H1 (cell line): ENCODE measurements at regions of chr10 and their contacts with region 1.

Region 1: GRCh38 chr10:97196223-97197029 is 10.7 kb upstream of the SLIT1 start:
- DNase-seq: peak; percentile 56 to 85
- H3K4me3 ChIP-seq: peak overlapping the region; percentile 49 to 76 (median 64)
- H3K27ac ChIP-seq: no peak overlapping the region
- H3K4me1 ChIP-seq: peaks cover 2 to 9% (median 5%) of the 10 kb centered on the region in 4 experiments; a peak in 5 of 7 replicates
- H3K27me3 ChIP-seq: peaks cover 0 to 12% (median 7%) of the 10 kb centered on the region in 4 experiments; a peak in 5 of 7 replicates
- CTCF ChIP-seq: peak; percentile 73 to 89 (median 83)
- EP300 ChIP-seq: no peak
- POLR2A ChIP-seq: no peak
- RAD21 ChIP-seq: peak; percentile 55 to 73

Region 2: GRCh38 chr10:96987842-96988175 is 208.6 kb before region 1 on chr10:
- CTCF ChIA-PET with region 1: no interaction called
- POLR2A ChIA-PET with region 1: no interaction called
- DNase-seq: no peak
- H3K4me3 ChIP-seq: no peak overlapping the region
- H3K27ac ChIP-seq: no peak overlapping the region
- H3K4me1 ChIP-seq: peaks cover 0 to 10% (median 1%) of the 10 kb centered on the region in 4 experiments; a peak in 5 of 7 replicates
- H3K27me3 ChIP-seq: no peaks in the 10 kb centered on the region
- CTCF ChIP-seq: no peak
- EP300 ChIP-seq: no peak
- POLR2A ChIP-seq: no peak
- RAD21 ChIP-seq: no peak

Region 3: GRCh38 chr10:97072851-97073665 is 123.4 kb before region 1 on chr10:
- CTCF ChIA-PET with region 1: interaction called, 1,348 read pairs
- POLR2A ChIA-PET with region 1: interaction called, 3 read pairs
- DNase-seq: peak; percentile 56 to 98
- H3K4me3 ChIP-seq: no peak overlapping the region
- H3K27ac ChIP-seq: no peak overlapping the region
- H3K4me1 ChIP-seq: peaks cover 0 to 8% (median under 1%) of the 10 kb centered on the region in 4 experiments; a peak in 3 of 7 replicates
- H3K27me3 ChIP-seq: peaks cover 0 to 3% (median 0%) of the 10 kb centered on the region in 4 experiments; a peak in 1 of 7 replicates
- CTCF ChIP-seq: peak; percentile 81 to 97 (median 97)
- EP300 ChIP-seq: peak in 1 of 2 experiments; percentile 22; a peak in 1 of 3 replicates
- POLR2A ChIP-seq: no peak
- RAD21 ChIP-seq: peak; percentile 98

Region 4: DNA sequence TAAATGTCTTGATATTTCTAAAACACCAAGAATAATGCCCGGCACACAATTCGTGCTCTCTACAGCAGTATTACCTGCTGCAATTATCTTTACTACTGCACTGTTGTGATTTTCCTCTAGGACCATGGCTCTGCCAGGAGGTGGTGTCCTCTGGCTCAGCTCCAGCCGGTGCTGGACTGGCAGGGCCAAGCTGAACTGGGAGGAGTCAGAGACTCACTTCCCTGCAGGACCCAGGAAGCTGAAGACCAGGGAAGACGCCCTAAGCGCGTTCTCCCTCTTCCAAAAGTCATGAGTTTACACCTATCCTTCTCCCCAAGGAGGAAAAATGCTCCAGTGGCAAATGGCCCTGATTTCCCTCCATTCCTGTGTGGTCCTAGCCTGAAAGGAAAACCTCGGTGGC is 26.1 kb before region 1 on chr10:
- CTCF ChIA-PET with region 1: interaction called, 14 read pairs
- POLR2A ChIA-PET with region 1: no interaction called
- DNase-seq: no peak
- H3K4me3 ChIP-seq: no peak overlapping the region
- H3K27ac ChIP-seq: no peak overlapping the region
- H3K4me1 ChIP-seq: peaks cover 0 to 1% (median 0%) of the 10 kb centered on the region in 4 experiments; a peak in 2 of 7 replicates
- H3K27me3 ChIP-seq: no peaks in the 10 kb centered on the region
- CTCF ChIP-seq: no peak
- EP300 ChIP-seq: no peak
- POLR2A ChIP-seq: no peak
- RAD21 ChIP-seq: no peak

Region 5: DNA sequence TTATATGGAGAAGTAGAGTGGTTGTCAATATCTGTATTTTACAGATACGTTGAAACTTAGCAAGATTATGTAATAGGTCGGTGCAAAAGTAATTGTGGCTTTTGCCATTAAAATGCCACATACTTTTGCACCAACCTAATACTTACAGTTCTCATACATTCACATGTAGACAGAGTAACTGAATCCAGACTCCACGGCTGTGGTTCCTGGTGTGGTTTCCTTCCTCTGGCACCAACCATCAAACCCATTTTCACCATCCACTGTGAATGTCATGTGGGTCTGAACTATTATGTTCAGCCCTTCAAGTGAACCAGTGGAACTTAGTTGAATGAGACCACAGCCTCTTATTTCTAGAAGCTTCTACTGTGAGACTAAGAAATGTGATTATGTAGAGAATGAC is 20.9 kb after region 1 on chr10:
- CTCF ChIA-PET with region 1: interaction called, 21 read pairs
- POLR2A ChIA-PET with region 1: interaction called, 3 read pairs
- DNase-seq: no peak
- H3K4me3 ChIP-seq: no peak overlapping the region
- H3K27ac ChIP-seq: no peak overlapping the region
- H3K4me1 ChIP-seq: peaks cover 0 to 4% (median under 1%) of the 10 kb centered on the region in 4 experiments; a peak in 2 of 7 replicates
- H3K27me3 ChIP-seq: no peaks in the 10 kb centered on the region
- CTCF ChIP-seq: no peak
- EP300 ChIP-seq: no peak
- POLR2A ChIP-seq: no peak
- RAD21 ChIP-seq: no peak

Region 6: GRCh38 chr10:97234400-97234799 is 38.0 kb after region 1 on chr10:
- CTCF ChIA-PET with region 1: interaction called, 19 read pairs
- POLR2A ChIA-PET with region 1: interaction called, 3 read pairs
- DNase-seq: no peak
- H3K4me3 ChIP-seq: no peak overlapping the region
- H3K27ac ChIP-seq: no peak overlapping the region
- H3K4me1 ChIP-seq: no peaks in the 10 kb centered on the region
- H3K27me3 ChIP-seq: no peaks in the 10 kb centered on the region
- CTCF ChIP-seq: peak in 2 of 3 experiments; percentile 31 to 57; a peak in 2 of 4 replicates
- EP300 ChIP-seq: no peak
- POLR2A ChIP-seq: no peak
- RAD21 ChIP-seq: peak; percentile 70 to 75